ENCODE measurements at regions of chr1 and their contacts with region 1.

Region 1: GRCh38 chr1:31548907-31549808 is 27.2 kb upstream of the TINAGL1 start:
- DNase-seq: peak; percentile 79
- ATAC-seq: peak; percentile 90
- H3K4me3 ChIP-seq: peak overlapping the region; percentile 41 to 75 (median 51)
- H3K27ac ChIP-seq: peak overlapping the region; percentile 55
- H3K4me1 ChIP-seq: peaks cover 57% of the 10 kb centered on the region
- H3K27me3 ChIP-seq: no peaks in the 10 kb centered on the region
- CTCF ChIP-seq: peak; percentile 94
- EP300 ChIP-seq: no peak
- POLR2A ChIP-seq: peak in 1 of 2 experiments; percentile 27; a peak in 1 of 4 replicates
- RAD21 ChIP-seq: peak; percentile 95

Region 2: GRCh38 chr1:31394628-31395193 is 154.4 kb before region 1 on chr1:
- CTCF ChIA-PET with region 1: interaction called, 19 read pairs
- POLR2A ChIA-PET with region 1: interaction called, 3 read pairs
- in situ Hi-C with region 1: loop called (anchors 5 kb)
- intact Hi-C with region 1: loop called (anchors 1 kb)
- DNase-seq: peak; percentile 57
- ATAC-seq: peak; percentile 94
- H3K4me3 ChIP-seq: peak overlapping the region; percentile 2 to 70 (median 12); a peak in 4 of 6 replicates
- H3K27ac ChIP-seq: no peak overlapping the region
- H3K4me1 ChIP-seq: peaks cover 55% of the 10 kb centered on the region
- H3K27me3 ChIP-seq: peaks cover 2 to 10% of the 10 kb centered on the region in 2 experiments; a peak in 4 of 5 replicates
- CTCF ChIP-seq: peak; percentile 96
- EP300 ChIP-seq: no peak
- POLR2A ChIP-seq: no peak
- RAD21 ChIP-seq: peak; percentile 95

Region 3: GRCh38 chr1:31422505-31423319 is 126.4 kb before region 1 on chr1:
- CTCF ChIA-PET with region 1: interaction called, 29 read pairs
- POLR2A ChIA-PET with region 1: interaction called, 7 read pairs
- in situ Hi-C with region 1: no loop called
- intact Hi-C with region 1: loop called (anchors 2 kb)
- DNase-seq: peak; percentile 70
- ATAC-seq: peak; percentile 87
- H3K4me3 ChIP-seq: no peak overlapping the region
- H3K27ac ChIP-seq: peak overlapping the region; percentile 62
- H3K4me1 ChIP-seq: peaks cover 72% of the 10 kb centered on the region
- H3K27me3 ChIP-seq: no peaks in the 10 kb centered on the region
- CTCF ChIP-seq: peak; percentile 94
- EP300 ChIP-seq: 0 out of 4 replicates have a peak, but pooled peaks of 1 of the 2 experiments have one; percentile 6
- POLR2A ChIP-seq: no peak
- RAD21 ChIP-seq: peak; percentile 94

Region 4: DNA sequence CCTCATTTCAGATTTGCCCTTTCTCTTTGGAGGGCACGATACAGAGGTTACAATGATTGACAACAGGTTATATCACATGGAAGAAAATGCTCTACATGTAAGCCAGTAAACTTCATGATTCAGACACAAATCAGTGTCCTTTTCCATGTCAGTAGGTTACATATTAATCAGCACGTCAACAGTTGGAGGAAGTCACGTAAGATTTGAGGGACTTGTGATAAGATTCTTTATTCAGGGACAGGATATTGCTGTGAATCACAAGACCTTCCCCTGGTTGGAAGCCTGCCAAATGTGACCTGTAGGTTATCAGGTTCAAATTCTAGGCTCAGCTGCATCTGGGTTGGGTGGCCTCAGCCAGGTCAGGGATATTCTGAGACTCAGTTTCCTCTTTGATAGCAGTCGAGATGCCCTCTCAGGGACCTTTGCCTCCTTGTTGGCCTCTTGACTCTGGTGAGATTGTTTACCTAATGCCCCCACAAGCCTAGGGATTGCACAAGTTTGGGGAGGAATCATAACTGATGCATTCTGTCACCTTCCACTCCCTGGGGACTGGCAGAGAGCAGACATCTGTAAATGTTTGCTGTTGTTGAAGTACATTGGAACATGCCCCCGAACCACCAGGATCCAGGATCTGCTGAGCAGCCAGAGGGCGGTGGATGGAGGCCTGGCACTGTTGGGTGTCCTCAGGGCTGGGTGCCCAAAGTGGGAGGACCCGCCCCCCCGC is 104.3 kb before region 1 on chr1:
- CTCF ChIA-PET with region 1: interaction called, 3 read pairs
- POLR2A ChIA-PET with region 1: interaction called, 17 read pairs
- in situ Hi-C with region 1: no loop called
- intact Hi-C with region 1: no loop called
- DNase-seq: peak; percentile 97
- ATAC-seq: peak; percentile 68
- H3K4me3 ChIP-seq: peak overlapping the region in 1 of 3 experiments; percentile 23; a peak in 1 of 6 replicates
- H3K27ac ChIP-seq: peak overlapping the region; percentile 78
- H3K4me1 ChIP-seq: peaks cover 97% of the 10 kb centered on the region
- H3K27me3 ChIP-seq: no peaks in the 10 kb centered on the region
- CTCF ChIP-seq: no peak
- EP300 ChIP-seq: peak in 1 of 2 experiments; percentile 92; a peak in 2 of 4 replicates
- POLR2A ChIP-seq: no peak
- RAD21 ChIP-seq: no peak

Region 5: GRCh38 chr1:31460027-31460426 is 89.1 kb before region 1 on chr1:
- CTCF ChIA-PET with region 1: interaction called, 32 read pairs
- POLR2A ChIA-PET with region 1: no interaction called
- in situ Hi-C with region 1: no loop called
- intact Hi-C with region 1: loop called (anchors 1 kb)
- DNase-seq: peak; percentile 21
- ATAC-seq: no peak
- H3K4me3 ChIP-seq: no peak overlapping the region
- H3K27ac ChIP-seq: no peak overlapping the region
- H3K4me1 ChIP-seq: no peaks in the 10 kb centered on the region
- H3K27me3 ChIP-seq: no peaks in the 10 kb centered on the region
- CTCF ChIP-seq: peak; percentile 50
- EP300 ChIP-seq: no peak
- POLR2A ChIP-seq: no peak
- RAD21 ChIP-seq: no peak

Region 6: GRCh38 chr1:31505911-31506497 is 43.2 kb before region 1 on chr1:
- CTCF ChIA-PET with region 1: interaction called, 7 read pairs
- POLR2A ChIA-PET with region 1: interaction called, 13 read pairs
- in situ Hi-C with region 1: no loop called
- intact Hi-C with region 1: loop called (anchors 5 kb)
- DNase-seq: no peak
- ATAC-seq: no peak
- H3K4me3 ChIP-seq: no peak overlapping the region
- H3K27ac ChIP-seq: no peak overlapping the region
- H3K4me1 ChIP-seq: peaks cover 70% of the 10 kb centered on the region
- H3K27me3 ChIP-seq: no peaks in the 10 kb centered on the region
- CTCF ChIP-seq: no peak
- EP300 ChIP-seq: no peak
- POLR2A ChIP-seq: no peak
- RAD21 ChIP-seq: no peak

Region 7: DNA sequence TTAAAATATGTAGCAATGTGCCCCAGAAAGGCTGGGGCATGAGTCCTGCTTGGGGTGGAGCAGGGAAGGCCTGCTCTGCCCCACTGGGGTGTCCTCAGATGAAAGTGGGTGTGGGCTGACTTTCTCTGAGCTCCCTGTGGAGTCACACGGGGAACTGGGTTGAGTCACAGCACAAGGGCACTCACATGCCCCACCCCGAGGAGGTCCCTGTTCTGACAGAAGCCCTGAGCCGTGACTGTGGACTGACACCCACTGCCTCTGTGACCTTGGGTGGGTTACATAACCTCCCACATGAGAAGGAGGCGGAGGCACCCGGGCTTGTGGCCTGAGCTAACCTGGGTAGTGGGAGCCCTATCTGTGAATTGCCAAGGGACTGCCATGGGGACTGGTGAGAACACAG is 25.4 kb before region 1 on chr1:
- CTCF ChIA-PET with region 1: interaction called, 3 read pairs
- POLR2A ChIA-PET with region 1: interaction called, 15 read pairs
- in situ Hi-C with region 1: no loop called
- intact Hi-C with region 1: no loop called
- DNase-seq: peak; percentile 32
- ATAC-seq: peak; percentile 87
- H3K4me3 ChIP-seq: peak overlapping the region in 1 of 3 experiments; percentile 20; a peak in 2 of 6 replicates
- H3K27ac ChIP-seq: peak overlapping the region; percentile 69
- H3K4me1 ChIP-seq: peaks cover 31% of the 10 kb centered on the region
- H3K27me3 ChIP-seq: no peaks in the 10 kb centered on the region
- CTCF ChIP-seq: no peak
- EP300 ChIP-seq: no peak; a peak in 1 of 4 replicates
- POLR2A ChIP-seq: no peak
- RAD21 ChIP-seq: no peak

Region 8: DNA sequence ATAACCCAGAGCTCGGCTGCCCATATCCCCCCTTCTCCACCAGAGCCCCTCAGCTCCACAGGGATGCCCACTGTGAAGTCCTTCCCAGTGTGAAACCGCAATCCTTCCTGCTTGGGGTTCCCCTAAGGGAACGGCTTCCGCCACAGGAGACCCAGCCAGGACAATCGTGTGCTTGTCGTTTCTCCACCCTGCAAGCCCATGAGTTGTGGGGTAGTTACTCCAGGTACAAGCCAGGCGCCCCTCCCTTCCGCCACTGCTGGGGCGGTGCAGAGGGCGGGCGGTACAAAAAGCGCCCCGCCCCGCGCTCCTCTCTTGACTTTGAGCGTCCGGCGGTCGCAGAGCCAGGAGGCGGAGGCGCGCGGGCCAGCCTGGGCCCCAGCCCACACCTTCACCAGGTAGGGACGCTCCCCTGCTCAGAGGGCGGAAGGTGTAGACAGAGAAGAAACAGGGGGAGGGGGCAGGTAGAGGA is 27.1 kb after region 1 on chr1 and contains the start of gene TINAGL1:
- CTCF ChIA-PET with region 1: no interaction called
- POLR2A ChIA-PET with region 1: no interaction called
- in situ Hi-C with region 1: no loop called
- intact Hi-C with region 1: no loop called
- DNase-seq: peak; percentile 81
- ATAC-seq: peak; percentile 77
- H3K4me3 ChIP-seq: peak within 1 kb of the TSS; percentile 69 to 84 (median 79)
- H3K27ac ChIP-seq: peak within 1 kb of the TSS; percentile 94
- H3K4me1 ChIP-seq: peaks cover 88% of the 10 kb centered on the region
- H3K27me3 ChIP-seq: no peaks in the 10 kb centered on the region; a peak in 1 of 5 replicates
- CTCF ChIP-seq: no peak
- EP300 ChIP-seq: peak in 1 of 2 experiments; percentile 46; a peak in 1 of 4 replicates
- POLR2A ChIP-seq: peak; percentile 68 to 80
- RAD21 ChIP-seq: 0 out of 2 replicates have a peak, but pooled peaks have one; percentile 8
- total RNA-seq, gene TINAGL1: 10.5 and 24.7 TPM in 2 replicates